ENCODE measurements at regions of chr2 and their contacts with region 1.

Region 1: DNA sequence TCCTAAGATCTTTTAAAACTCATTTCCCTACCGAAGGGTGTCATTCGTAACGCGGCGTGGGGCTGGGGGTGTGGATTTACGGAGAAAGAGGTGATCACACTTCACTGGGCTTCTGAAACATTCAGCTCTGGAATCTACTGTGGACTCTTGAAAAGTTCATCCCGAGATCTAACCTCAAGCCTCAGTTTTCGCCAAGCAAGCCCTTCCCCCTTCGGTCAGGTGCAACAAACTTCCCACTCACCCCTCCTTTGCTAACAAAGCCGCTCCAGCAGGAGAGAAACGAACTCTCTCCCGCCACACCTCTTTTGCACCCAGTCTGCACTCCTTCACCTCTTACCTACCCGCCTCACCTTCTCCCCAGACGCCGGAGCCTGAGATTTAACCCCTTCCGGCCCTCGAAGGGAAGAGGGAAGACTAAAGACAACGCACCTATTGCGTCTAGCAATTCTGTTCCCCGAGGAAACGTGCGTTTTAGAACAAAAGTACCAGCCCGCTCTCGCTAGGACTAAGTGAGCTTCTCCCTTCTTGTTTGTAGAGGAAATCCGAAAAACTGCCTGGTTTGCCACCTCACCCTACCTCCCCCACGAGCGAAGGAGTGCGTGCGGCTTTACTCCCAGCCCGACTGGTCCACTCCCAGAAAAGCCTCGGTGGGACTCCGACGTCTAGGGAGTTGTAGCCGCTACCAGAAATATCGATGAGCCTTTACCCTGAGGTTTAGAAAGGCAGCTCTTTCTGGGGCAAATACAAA is 538 bp upstream of the PEX13 start:
- DNase-seq: peak; percentile 83
- ATAC-seq: peak; percentile 69
- H3K4me3 ChIP-seq: peak overlapping the region; percentile 81 to 98 (median 94)
- H3K4me3 Mint-ChIP-seq: peak overlapping the region; percentile 100
- H3K27ac ChIP-seq: peak overlapping the region; percentile 69 to 84
- H3K27ac Mint-ChIP-seq: peak overlapping the region; percentile 98
- H3K4me1 ChIP-seq: peaks cover 5 to 19% of the 10 kb centered on the region in 2 donors
- H3K4me1 Mint-ChIP-seq: peaks cover 37% of the 10 kb centered on the region
- H3K27me3 ChIP-seq: no peaks in the 10 kb centered on the region
- H3K27me3 Mint-ChIP-seq: no peaks in the 10 kb centered on the region
- CTCF ChIP-seq: no peak

Region 2: DNA sequence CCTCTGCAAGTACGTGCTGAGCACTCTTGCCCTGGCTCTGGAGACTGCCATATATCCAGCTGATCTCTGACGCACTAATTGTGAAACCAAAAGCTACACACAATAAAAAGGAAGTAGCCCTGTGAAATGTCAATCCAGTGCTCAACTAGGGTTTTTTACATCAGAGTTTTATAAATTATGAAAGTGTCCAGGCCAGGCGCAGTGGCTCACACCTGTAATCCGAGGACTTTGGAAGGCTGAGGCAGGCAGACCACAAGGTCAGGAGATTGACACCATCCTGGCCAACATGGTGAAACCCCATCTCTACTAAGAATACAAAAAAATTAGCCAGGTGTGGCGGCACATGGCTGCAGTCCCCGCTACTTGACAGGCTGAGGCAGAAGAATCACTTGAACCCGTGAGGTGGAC is 24.0 kb before region 1 on chr2:
- CTCF ChIA-PET with region 1: interaction called, 3 read pairs
- POLR2A ChIA-PET with region 1: interaction called, 4 read pairs
- intact Hi-C with region 1: loop called (anchors 2 kb)
- DNase-seq: peak; percentile 90
- ATAC-seq: peak; percentile 94
- H3K4me3 ChIP-seq: peak overlapping the region in 3 of 5 experiments; percentile 19 to 41 (median 21)
- H3K4me3 Mint-ChIP-seq: peak overlapping the region; percentile 73
- H3K27ac ChIP-seq: peak overlapping the region; percentile 86 to 95
- H3K27ac Mint-ChIP-seq: peak overlapping the region; percentile 92
- H3K4me1 ChIP-seq: peaks cover 55 to 58% of the 10 kb centered on the region in 2 donors
- H3K4me1 Mint-ChIP-seq: peaks cover 70% of the 10 kb centered on the region
- H3K27me3 ChIP-seq: no peaks in the 10 kb centered on the region
- H3K27me3 Mint-ChIP-seq: no peaks in the 10 kb centered on the region
- CTCF ChIP-seq: no peak

Region 3: DNA sequence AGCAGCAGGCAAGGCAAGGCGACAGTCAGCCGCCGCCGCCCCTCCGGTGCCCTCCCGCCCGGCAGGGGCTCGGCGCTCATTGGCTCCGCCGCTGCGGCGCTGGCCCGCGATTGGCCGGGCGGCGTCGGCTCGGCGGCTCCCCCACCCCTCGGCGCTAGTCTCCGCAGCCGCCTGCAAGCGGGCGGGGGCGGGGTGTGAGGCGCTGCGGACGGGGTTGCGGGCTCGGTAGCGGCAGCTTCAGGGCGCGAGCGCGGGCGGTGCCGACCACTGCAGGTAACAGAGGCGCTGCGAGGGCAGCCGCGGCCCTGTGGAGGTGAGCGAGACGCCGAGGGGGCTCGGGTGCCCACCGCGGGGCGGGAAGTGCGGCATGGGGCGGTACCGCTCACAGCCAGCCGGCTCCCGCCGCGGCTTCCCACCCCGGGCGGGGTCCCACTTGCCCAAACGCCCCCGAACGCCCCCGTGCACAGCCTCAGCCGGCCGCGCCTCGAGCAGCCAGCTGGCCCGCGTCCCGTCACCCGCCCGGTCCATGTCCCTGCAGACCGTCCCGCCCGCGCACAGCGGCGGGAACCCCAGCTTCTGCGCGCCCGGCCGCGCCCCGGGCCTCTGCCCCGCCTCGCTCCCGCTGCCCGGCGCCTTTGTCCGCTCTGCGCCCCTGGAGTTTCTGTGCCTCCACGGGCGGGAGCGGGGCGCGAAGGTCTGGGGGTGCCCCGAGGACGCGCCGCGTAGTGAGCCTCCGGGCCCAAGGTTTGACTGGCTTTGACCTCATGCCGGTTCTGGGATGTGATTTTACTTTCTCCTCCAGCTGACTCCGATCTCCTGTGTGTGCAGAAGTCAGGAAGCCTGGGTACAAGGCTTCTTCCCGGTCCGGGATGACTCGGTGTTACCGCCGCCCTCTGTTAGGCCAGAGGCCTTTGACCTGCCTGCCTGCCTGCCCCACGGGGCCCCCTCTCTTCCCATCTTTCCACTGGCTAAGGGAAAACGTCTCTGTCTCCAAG is 49.0 kb after region 1 on chr2 and contains the start of gene SANBR:
- CTCF ChIA-PET with region 1: no interaction called
- POLR2A ChIA-PET with region 1: no interaction called
- intact Hi-C with region 1: loop called (anchors 1 kb)
- DNase-seq: peak; percentile 89
- ATAC-seq: peak; percentile 98
- H3K4me3 ChIP-seq: peak within 1 kb of the TSS; percentile 45 to 81 (median 70)
- H3K4me3 Mint-ChIP-seq: peak within 1 kb of the TSS; percentile 96
- H3K27ac ChIP-seq: peak within 1 kb of the TSS in 1 of 2 donors; percentile 24
- H3K27ac Mint-ChIP-seq: peak within 1 kb of the TSS; percentile 89
- H3K4me1 ChIP-seq: peaks cover 12 to 17% of the 10 kb centered on the region in 2 donors
- H3K4me1 Mint-ChIP-seq: peaks cover 13% of the 10 kb centered on the region
- H3K27me3 ChIP-seq: no peaks in the 10 kb centered on the region
- H3K27me3 Mint-ChIP-seq: no peaks in the 10 kb centered on the region
- CTCF ChIP-seq: no peak
- total RNA-seq, gene SANBR: 6.6 and 7.4 TPM in 2 replicates

Region 4: GRCh38 chr2:61144697-61145268 is 127.8 kb after region 1 on chr2:
- CTCF ChIA-PET with region 1: no interaction called
- POLR2A ChIA-PET with region 1: interaction called, 3 read pairs
- intact Hi-C with region 1: loop called (anchors 2 kb)
- DNase-seq: peak; percentile 97
- ATAC-seq: peak; percentile 90
- H3K4me3 ChIP-seq: peak overlapping the region; percentile 78 to 95 (median 88)
- H3K4me3 Mint-ChIP-seq: peak overlapping the region; percentile 95
- H3K27ac ChIP-seq: peak overlapping the region; percentile 76 to 78
- H3K27ac Mint-ChIP-seq: peak overlapping the region; percentile 98
- H3K4me1 ChIP-seq: peaks cover 8 to 11% of the 10 kb centered on the region in 2 donors
- H3K4me1 Mint-ChIP-seq: peaks cover 13% of the 10 kb centered on the region
- H3K27me3 ChIP-seq: no peaks in the 10 kb centered on the region
- H3K27me3 Mint-ChIP-seq: no peaks in the 10 kb centered on the region
- CTCF ChIP-seq: no peak

Measured in B cell (primary cell).